Posterior cingulate gyrus (tissue), 11 donors: ENCODE measurements at regions of chr1 and their contacts with region 1.

Region 1: DNA sequence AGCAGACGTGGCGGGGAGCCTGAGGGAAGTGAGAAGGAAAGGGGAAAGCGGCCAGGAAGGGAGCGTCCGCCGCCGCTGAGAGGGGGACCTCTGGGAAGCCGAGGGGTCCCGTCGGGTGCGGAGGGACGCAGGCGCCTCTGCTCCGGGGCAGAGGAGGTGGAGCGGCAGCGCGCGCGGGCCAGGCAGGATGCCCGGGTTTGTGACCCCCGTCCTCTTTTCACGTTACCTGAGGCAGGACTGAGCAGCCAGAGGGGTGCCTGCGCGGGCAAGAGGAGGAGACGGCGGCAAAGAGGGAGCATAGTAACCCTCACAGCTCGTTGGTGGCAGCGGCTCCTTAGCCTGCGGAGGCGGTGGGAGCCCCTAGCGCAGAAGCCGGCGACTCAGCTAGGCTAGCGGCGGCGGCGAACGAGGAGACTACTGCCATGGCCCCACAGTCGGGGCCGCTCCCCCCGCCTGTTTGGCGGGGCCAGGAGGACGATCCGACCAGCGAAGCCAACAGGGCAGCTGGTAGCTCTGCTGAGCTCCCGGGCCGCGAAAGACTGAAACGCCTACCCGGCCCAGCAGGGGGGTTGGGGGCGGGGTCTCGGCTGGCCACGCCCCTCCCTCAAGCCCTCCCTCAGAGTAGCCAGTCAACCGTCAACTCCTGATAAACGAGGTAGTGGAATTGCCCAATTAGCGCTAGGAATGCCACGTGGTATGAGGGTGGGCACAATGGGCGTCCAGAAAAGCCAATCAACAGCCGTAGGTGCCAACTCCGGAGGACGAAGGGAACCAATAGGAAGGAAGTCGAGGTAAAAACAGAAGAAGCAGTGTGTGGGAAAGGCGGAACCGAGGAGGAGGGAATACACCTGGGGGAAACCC is at the start of gene TESK2:
- DNase-seq: peak; percentile 95 to 100 (median 98)

Region 2: GRCh38 chr1:45339789-45340570 is 150.9 kb before region 1 on chr1 and contains the starts of genes MUTYH and TOE1:
- intact Hi-C with region 1: loop called (anchors 5 kb)
- DNase-seq: peak; percentile 80 to 98 (median 89)

Region 3: DNA sequence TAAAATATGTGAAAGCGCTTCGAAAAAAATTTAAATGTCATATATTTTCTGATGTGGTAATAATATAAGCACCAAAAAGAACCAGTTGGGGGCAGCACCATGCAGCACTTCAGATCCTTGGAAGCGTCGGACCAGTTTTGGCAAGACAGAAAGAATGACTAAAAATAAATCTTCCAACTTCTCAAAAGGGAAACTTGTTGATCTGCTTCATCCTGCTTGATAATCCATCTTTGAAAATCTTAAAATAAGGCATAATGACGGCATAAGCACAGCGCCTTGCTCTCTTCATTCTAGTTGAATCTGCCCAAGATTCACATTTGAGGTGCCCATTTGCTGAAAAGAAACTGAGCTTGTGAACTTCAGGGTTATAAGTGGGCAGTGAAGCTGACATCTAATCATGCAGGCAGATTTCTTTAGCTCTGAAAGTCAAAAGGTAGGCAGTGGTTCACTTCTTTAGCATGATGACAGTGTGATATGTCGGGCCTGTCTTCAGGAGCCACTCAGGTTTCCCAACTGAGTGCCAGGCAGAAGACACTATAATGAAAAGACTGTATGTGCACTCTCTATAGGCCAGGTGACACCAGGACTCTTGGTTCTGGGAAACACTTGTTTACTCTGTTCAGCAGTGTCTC is 130.9 kb before region 1 on chr1:
- intact Hi-C with region 1: loop called (anchors 1 kb)
- DNase-seq: peak in 8 of 10 donors; percentile 51 to 94 (median 72)